ENCODE measurements at regions of chr3 and their contacts with region 1.

Region 1: DNA sequence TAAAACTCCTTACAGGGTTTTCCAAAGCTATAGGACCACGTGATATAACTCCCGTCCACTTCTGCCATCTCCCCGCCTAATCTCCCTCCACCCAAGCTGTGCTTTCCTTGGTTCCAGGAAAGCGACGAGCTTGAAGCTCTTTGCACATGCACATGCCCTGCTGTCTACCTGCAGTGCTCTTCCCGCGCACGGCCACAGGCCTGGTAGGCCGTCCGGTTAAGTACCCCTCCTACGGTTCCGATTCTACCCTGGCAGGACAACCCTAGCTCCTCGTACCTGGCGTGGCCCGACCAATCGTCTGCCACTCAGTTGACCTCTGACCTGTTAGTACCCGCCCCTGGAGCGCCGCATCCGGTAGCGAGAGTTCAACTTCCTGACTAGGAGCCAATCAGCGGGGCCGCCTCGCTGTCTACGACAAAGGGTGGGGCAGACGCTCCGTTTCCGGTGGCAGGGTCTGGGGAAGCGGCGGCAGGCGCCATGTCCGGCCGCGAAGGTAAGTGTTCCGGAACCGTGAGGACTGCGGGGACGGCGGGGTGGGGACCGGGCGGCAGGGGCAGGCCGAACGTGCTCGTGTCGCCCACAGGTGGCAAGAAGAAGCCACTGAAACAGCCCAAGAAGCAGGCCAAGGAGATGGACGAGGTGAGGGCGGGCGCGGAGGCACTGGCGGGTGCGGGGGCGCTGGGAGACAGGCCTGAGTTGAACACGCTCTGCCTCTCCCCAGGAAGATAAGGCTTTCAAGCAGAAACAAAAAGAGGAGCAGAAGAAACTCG is at the starts of genes CCDC51 and TMA7:
- DNase-seq: peak; percentile 94 to 99 (median 98)
- ATAC-seq: peak; percentile 97
- H3K4me3 ChIP-seq: peak within 1 kb of the TSS; percentile 75 to 94
- H3K27ac ChIP-seq: peak within 1 kb of the TSS; percentile 92 to 96
- H3K4me1 ChIP-seq: peaks cover 13 to 40% of the 10 kb centered on the region in 2 donors
- H3K27me3 ChIP-seq: no peaks in the 10 kb centered on the region
- CTCF ChIP-seq: no peak
- polyA plus RNA-seq, gene CCDC51: 13.5 to 16.2 (median 15.1) TPM
- polyA plus RNA-seq, gene TMA7: 214 to 288 (median 258) TPM

Region 2: DNA sequence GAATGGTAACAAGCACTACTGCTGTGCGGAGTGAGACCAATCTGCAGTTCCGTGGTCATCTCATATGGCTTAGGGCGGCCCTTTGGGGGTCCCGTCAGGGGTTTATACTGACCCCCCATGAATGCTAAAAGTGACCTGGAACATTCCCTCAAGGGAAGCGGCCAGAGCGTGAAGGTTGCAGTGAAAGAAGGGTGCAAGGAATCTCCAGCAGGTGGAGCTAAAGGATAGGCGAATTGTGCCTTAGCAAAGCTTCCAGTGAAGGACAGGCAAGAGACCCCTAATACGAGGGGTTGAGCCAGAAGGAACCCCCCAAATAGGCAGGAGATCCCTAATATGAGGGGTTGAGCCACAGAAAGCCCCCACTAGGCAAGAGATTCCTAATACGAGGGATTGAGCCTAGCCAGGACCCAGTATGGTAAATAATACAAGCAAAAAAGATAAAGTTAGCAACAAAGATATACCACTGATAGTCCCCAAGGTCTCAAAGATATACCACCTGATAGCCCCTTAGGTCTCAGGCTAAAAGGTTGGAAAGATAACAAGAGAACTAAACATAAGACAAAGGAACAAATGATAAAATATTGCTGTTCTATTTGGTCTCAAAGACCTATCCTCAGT is 166.3 kb before region 1 on chr3:
- intact Hi-C with region 1: loop called in 1 of 2 experiments (anchors 5 kb)
- DNase-seq: peak in 2 of 4 donors; percentile 54 to 68
- ATAC-seq: peak; percentile 85
- H3K4me3 ChIP-seq: no peak overlapping the region
- H3K27ac ChIP-seq: no peak overlapping the region
- H3K4me1 ChIP-seq: peaks cover 0 to 5% of the 10 kb centered on the region in 2 donors
- H3K27me3 ChIP-seq: no peaks in the 10 kb centered on the region
- CTCF ChIP-seq: peak; percentile 75 to 84

Region 3: DNA sequence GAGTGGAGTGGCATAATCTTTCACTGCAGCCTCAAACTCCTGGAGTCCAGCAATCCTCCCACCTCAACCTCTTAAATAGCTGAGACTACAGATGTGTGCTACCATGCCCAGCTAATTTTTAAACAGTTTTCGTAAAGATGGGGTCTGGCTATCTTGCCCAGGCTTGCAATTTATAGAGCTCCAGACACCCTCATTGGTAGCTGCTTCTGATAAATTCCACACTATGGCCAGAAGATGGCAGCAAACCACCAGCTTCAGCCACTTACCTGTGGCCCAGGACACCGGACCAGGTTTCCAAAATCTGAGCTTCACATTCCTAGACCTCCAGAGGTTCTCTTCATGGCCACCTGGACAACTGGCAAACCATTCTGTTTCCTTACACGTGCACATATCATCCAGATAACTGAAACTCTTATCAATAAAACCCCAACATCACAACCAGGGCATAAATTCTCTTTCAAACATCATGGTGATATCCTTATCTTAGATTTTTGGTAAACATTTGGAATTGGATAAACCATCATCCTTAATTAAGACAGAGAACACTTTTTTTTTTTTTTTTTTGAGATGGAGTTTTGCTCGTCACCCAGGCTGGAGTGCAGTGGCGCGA is 39.1 kb before region 1 on chr3:
- intact Hi-C with region 1: loop called in 1 of 2 experiments (anchors 5 kb)
- DNase-seq: peak in 3 of 4 donors; percentile 17 to 70 (median 46)
- ATAC-seq: peak; percentile 76
- H3K4me3 ChIP-seq: no peak overlapping the region
- H3K27ac ChIP-seq: no peak overlapping the region
- H3K4me1 ChIP-seq: peaks cover 0 to 10% of the 10 kb centered on the region in 2 donors
- H3K27me3 ChIP-seq: no peaks in the 10 kb centered on the region
- CTCF ChIP-seq: peak; percentile 66 to 83

Measured in left lung (tissue), 14 donors.